ENCODE measurements at regions of chr5 and their contacts with region 1.

Region 1: GRCh38 chr5:36875790-36876388 is 680 bp upstream of the NIPBL start:
- DNase-seq: peak; percentile 92

Region 2: GRCh38 chr5:36944607-36945225 is 68.8 kb after region 1 on chr5:
- intact Hi-C with region 1: loop called (anchors 5 kb)
- DNase-seq: no peak

Region 3: DNA sequence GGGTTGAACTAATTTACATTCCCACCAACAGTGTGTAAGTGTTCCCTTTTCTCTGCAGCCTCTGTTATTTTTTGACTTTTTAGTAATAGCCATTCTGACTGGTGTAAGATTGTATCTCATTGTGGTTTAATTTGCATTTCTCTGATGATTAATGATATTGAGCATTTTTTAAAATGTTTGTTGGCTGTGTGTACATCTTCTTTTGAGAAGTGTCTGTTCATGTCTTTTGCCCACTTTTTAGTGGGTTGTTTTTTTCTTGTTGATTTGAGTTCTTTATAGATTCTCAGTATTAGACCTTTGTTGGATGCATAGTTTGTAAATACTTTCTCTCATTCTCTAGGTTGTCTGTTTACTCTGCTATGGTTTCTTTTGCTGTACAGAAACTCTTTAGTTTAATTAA is 102.3 kb after region 1 on chr5:
- intact Hi-C with region 1: no loop called
- DNase-seq: no peak

Region 4: GRCh38 chr5:37002176-37002751 is 126.4 kb after region 1 on chr5:
- intact Hi-C with region 1: loop called (anchors 5 kb)
- DNase-seq: no peak

Region 5: GRCh38 chr5:37370864-37371726 is 495.2 kb after region 1 on chr5 and contains the start of gene NUP155:
- intact Hi-C with region 1: loop called (anchors 10 kb)
- DNase-seq: peak; percentile 97
- total RNA-seq, gene NUP155: 11.5 TPM

Measured in cardiac septum (tissue), 1 donor.